ENCODE measurements at regions of chr10 and their contacts with region 1.

Region 1: GRCh38 chr10:103966671-103967447 is at the start of gene SLK:
- DNase-seq: peak; percentile 74 to 89
- H3K4me3 ChIP-seq: peak within 1 kb of the TSS; percentile 96 to 98
- H3K27ac ChIP-seq: peak within 1 kb of the TSS; percentile 97 to 99
- H3K4me1 ChIP-seq: peaks cover 0 to 34% (median 20%) of the 10 kb centered on the region in 4 donors
- H3K27me3 ChIP-seq: no peaks in the 10 kb centered on the region
- CTCF ChIP-seq: no peak

Region 2: GRCh38 chr10:103736763-103737162 is 230.1 kb before region 1 on chr10:
- intact Hi-C with region 1: no loop called
- DNase-seq: no peak
- H3K4me3 ChIP-seq: no peak overlapping the region
- H3K27ac ChIP-seq: no peak overlapping the region
- H3K4me1 ChIP-seq: peaks cover 0 to 20% (median 14%) of the 10 kb centered on the region in 4 donors
- H3K27me3 ChIP-seq: no peaks in the 10 kb centered on the region
- CTCF ChIP-seq: no peak

Region 3: DNA sequence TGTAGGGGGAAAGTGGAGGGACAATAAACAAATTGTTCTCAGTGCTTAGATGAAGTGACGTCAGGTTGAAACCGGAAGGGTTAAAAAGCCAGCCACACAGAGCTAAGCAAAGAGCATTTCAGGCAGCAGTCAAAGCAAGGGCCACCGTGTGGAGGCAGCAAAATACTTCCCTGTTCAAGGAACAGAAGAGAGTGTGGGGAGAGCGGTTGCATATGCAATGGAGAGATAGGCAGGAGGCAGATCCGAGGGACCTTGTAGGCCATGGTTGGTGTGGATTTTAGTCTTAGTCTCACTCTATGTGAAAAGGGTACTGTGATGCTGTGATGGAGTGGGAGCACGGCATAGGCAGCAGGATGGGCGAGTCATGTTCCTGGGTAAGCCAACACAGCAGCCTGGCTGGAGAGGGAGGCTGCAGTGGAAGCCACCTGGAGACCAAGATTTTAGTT is 45.1 kb before region 1 on chr10:
- intact Hi-C with region 1: loop called (anchors 2 kb)
- DNase-seq: no peak
- H3K4me3 ChIP-seq: no peak overlapping the region
- H3K27ac ChIP-seq: no peak overlapping the region
- H3K4me1 ChIP-seq: peaks cover 0 to 16% (median 10%) of the 10 kb centered on the region in 4 donors
- H3K27me3 ChIP-seq: no peaks in the 10 kb centered on the region
- CTCF ChIP-seq: no peak

Region 4: DNA sequence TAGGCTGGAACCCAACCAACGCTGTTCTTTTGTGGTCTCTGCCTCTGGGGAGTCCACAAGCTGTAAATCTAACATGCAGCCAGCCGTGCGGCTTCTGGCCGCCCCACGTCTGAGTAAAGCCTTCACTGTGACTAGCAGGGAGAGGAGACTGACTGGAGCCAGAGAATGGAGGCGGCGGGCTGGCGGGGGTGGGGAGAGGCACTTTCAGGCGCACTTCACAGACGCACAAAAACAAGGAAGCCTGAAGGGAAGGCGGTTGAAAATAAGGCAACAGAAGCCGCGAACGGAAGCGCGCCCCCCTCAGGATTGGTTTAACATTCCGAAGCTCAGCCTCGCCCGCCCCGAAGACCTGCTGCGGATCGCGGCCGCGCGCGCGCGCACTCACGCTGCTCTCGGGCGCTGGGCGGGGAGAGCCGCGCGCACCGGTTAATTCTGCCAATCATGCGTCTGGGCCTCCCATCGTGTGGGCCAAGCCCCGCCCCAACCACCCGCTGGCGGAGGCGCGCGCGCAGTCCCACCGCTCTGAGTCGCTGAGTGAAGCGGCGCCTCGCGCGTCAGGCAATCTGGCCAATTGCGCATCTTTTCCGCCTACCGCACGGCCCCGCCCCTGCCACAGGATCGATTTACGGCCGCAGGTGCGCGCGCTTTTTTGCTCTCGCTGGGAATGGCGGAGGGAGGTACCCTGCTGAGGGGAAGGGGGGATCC is 154.8 kb after region 1 on chr10 and contains the start of gene SFR1:
- intact Hi-C with region 1: loop called (anchors 10 kb)
- DNase-seq: peak; percentile 98 to 99
- H3K4me3 ChIP-seq: peak within 1 kb of the TSS; percentile 60 to 72
- H3K27ac ChIP-seq: peak within 1 kb of the TSS; percentile 96 to 98
- H3K4me1 ChIP-seq: peaks cover 0 to 25% (median 13%) of the 10 kb centered on the region in 4 donors
- H3K27me3 ChIP-seq: no peaks in the 10 kb centered on the region
- CTCF ChIP-seq: peak; percentile 54